ENCODE measurements at regions of chr13 and their contacts with region 1.

Region 1: GRCh38 chr13:60572003-60572798 is 175.2 kb downstream of the TDRD3 start:
- DNase-seq: no peak
- ATAC-seq: peak; percentile 86
- H3K4me3 Mint-ChIP-seq: no peak overlapping the region
- H3K27ac Mint-ChIP-seq: peak overlapping the region; percentile 98
- H3K4me1 Mint-ChIP-seq: peaks cover 62% of the 10 kb centered on the region
- H3K27me3 Mint-ChIP-seq: no peaks in the 10 kb centered on the region
- CTCF ChIP-seq: no peak

Region 2: DNA sequence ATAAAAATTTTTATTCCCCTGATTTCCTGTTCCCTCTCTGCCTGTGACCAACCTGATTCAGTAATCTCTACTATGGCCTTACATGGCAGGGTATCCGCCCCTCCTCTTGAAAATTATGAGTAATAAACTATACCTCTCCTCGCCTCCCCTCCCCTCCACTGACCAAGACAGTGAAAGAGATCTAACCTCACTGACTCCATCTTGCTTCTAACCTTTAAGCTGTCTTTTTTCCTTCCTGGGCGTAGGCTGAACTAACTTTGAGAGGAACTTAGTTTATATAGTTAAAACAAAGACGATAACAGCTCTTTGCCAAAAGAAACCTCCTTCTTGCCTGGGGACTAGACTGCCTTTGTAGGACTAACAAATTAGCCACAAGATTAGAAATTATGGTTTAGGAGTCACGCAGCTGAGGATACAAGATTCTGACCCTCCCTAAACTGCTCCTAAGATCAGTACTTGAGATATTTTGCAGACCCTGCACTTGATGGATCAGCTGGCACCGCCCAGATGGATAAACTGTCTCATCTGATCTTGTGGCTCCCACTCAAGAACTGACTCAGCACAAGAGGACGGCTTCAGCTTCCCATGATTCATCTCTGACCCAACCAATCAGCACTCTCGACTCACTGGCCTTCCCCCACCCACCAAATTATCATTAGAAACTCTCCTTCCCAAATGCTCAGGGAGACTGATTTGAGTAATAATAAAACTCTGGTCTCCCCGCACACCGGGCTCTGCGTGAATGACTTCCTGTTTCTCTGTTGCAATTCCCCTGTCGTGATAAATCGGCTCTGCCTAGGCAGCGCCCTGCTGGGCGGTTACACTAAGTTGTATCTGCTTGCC is 11.9 kb after region 1 on chr13:
- CTCF ChIA-PET with region 1: interaction called, 11 read pairs
- POLR2A ChIA-PET with region 1: interaction called, 4 read pairs
- DNase-seq: peak; percentile 66
- ATAC-seq: peak; percentile 65
- H3K4me3 Mint-ChIP-seq: peak overlapping the region; percentile 40
- H3K27ac Mint-ChIP-seq: peak overlapping the region; percentile 96
- H3K4me1 Mint-ChIP-seq: peaks cover 44% of the 10 kb centered on the region
- H3K27me3 Mint-ChIP-seq: no peaks in the 10 kb centered on the region; the same call in 1 of the 2 replicates
- CTCF ChIP-seq: no peak

Region 3: GRCh38 chr13:60765700-60766411 is 193.7 kb after region 1 on chr13:
- CTCF ChIA-PET with region 1: no interaction called
- POLR2A ChIA-PET with region 1: no interaction called
- DNase-seq: no peak
- ATAC-seq: no peak
- H3K4me3 Mint-ChIP-seq: no peak overlapping the region
- H3K27ac Mint-ChIP-seq: no peak overlapping the region
- H3K4me1 Mint-ChIP-seq: peaks cover 5% of the 10 kb centered on the region
- H3K27me3 Mint-ChIP-seq: no peaks in the 10 kb centered on the region
- CTCF ChIP-seq: no peak

Measured in WTC11 (cell line).